A673 (cell line): ENCODE measurements at regions of chr5 and their contacts with region 1.

Region 1: DNA sequence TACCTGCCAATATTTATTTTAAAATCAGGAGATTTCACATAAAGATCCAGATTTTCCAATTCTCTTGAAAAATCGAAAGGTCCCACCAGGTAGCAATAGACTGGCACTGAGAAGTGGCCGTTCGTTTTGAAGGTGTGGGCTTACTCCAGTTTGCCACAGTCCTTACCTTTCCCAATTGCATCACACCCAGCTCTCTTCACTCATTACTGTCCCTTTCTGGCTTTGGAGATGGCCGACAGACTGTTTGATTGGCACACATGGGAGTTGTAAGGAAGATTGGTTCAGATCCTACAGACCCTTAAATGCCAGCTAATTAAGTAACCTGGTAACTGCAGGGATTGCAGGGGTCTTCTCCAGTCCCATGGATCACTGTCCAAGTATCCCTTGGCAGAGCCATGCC is 68.7 kb upstream of the LARP1 start:
- DNase-seq: no peak
- H3K4me3 ChIP-seq: no peak overlapping the region
- H3K27ac ChIP-seq: no peak overlapping the region
- H3K4me1 ChIP-seq: peaks cover 10% of the 10 kb centered on the region
- H3K27me3 ChIP-seq: no peaks in the 10 kb centered on the region
- CTCF ChIP-seq: no peak

Region 2: GRCh38 chr5:154627698-154628678 is 58.5 kb before region 1 on chr5:
- CTCF ChIA-PET with region 1: interaction called, 10 read pairs
- POLR2A ChIA-PET with region 1: no interaction called
- intact Hi-C with region 1: no loop called
- DNase-seq: peak; percentile 50
- H3K4me3 ChIP-seq: no peak overlapping the region
- H3K27ac ChIP-seq: no peak overlapping the region
- H3K4me1 ChIP-seq: peaks cover 8% of the 10 kb centered on the region
- H3K27me3 ChIP-seq: no peaks in the 10 kb centered on the region
- CTCF ChIP-seq: no peak

Region 3: DNA sequence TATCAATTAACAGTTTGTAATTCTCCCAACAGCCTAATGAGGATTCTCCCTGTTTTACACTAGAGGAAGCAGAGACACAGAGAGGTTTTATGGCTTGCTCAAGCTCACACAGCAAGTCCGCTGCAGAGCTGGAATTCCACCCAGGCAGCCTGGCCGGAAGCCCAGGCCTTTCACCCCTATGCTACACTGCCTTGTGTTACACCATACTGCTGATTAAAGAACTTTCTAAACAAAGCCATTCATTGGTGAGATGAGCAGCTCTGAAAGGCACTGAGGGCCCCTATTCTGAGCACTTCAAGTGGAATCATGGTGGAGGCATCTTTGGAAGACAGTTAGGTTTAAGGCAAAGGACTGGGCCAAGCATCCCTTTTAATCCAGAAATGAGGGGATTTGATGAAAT is 54.0 kb after region 1 on chr5:
- CTCF ChIA-PET with region 1: no interaction called
- POLR2A ChIA-PET with region 1: no interaction called
- intact Hi-C with region 1: loop called (anchors 5 kb)
- DNase-seq: no peak
- H3K4me3 ChIP-seq: no peak overlapping the region
- H3K27ac ChIP-seq: no peak overlapping the region
- H3K4me1 ChIP-seq: no peaks in the 10 kb centered on the region
- H3K27me3 ChIP-seq: no peaks in the 10 kb centered on the region
- CTCF ChIP-seq: no peak